ENCODE measurements at regions of chr2 and their contacts with region 1.

Region 1: GRCh38 chr2:219362524-219363164 is 25.1 kb downstream of the DNPEP start:
- DNase-seq: no peak
- H3K4me3 ChIP-seq: no peak overlapping the region
- H3K27ac ChIP-seq: peak overlapping the region in 1 of 2 experiments; percentile 55; a peak in 2 of 4 replicates
- H3K4me1 ChIP-seq: peaks cover 4 to 9% of the 10 kb centered on the region in 2 experiments; a peak in 2 of 4 replicates
- H3K27me3 ChIP-seq: peaks cover 18% of the 10 kb centered on the region
- CTCF ChIP-seq: no peak
- EP300 ChIP-seq: peak in 1 of 2 experiments; percentile 55; a peak in 1 of 4 replicates
- RAD21 ChIP-seq: no peak

Region 2: GRCh38 chr2:219182331-219183150 is 180.1 kb before region 1 on chr2:
- CTCF ChIA-PET with region 1: no interaction called
- POLR2A ChIA-PET with region 1: no interaction called
- DNase-seq: no peak
- H3K4me3 ChIP-seq: no peak overlapping the region
- H3K27ac ChIP-seq: no peak overlapping the region
- H3K4me1 ChIP-seq: peaks cover 0 to 9% of the 10 kb centered on the region in 2 experiments; a peak in 2 of 4 replicates
- H3K27me3 ChIP-seq: no peaks in the 10 kb centered on the region
- CTCF ChIP-seq: no peak
- EP300 ChIP-seq: no peak
- RAD21 ChIP-seq: no peak

Region 3: DNA sequence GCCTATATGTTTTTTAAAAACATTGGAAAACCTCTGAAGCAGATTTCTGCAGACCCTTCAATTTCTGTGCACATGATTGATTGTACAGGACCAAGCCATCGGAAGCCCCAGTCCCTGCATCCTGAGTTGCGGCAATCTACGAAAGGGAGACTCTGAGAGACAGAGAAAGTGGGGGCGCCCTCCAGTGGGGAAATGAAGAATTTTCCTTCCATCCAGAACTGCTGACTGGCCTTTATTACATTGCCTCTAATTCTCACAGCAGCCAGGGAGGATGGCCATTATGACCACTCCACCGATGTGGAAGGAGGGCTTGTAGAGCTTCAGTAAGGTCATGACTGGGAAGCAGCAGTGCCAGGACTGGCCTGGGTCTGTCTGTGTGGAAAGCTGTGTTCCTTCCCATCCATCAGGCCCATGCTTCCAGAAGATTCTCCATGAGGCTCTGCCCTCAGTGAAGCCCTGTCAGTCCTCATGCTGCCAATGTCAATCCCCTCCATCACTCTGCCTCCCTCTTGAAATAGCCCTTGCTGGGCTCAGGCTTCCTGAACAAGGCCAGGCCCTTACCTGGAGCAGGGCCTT is 10.1 kb before region 1 on chr2:
- CTCF ChIA-PET with region 1: interaction called, 16 read pairs
- POLR2A ChIA-PET with region 1: no interaction called
- DNase-seq: peak; percentile 79
- H3K4me3 ChIP-seq: no peak overlapping the region
- H3K27ac ChIP-seq: no peak overlapping the region
- H3K4me1 ChIP-seq: no peaks in the 10 kb centered on the region
- H3K27me3 ChIP-seq: peaks cover 8% of the 10 kb centered on the region
- CTCF ChIP-seq: peak; percentile 79
- EP300 ChIP-seq: no peak
- RAD21 ChIP-seq: peak; percentile 67